ENCODE measurements at regions of chr10 and their contacts with region 1.

Region 1: DNA sequence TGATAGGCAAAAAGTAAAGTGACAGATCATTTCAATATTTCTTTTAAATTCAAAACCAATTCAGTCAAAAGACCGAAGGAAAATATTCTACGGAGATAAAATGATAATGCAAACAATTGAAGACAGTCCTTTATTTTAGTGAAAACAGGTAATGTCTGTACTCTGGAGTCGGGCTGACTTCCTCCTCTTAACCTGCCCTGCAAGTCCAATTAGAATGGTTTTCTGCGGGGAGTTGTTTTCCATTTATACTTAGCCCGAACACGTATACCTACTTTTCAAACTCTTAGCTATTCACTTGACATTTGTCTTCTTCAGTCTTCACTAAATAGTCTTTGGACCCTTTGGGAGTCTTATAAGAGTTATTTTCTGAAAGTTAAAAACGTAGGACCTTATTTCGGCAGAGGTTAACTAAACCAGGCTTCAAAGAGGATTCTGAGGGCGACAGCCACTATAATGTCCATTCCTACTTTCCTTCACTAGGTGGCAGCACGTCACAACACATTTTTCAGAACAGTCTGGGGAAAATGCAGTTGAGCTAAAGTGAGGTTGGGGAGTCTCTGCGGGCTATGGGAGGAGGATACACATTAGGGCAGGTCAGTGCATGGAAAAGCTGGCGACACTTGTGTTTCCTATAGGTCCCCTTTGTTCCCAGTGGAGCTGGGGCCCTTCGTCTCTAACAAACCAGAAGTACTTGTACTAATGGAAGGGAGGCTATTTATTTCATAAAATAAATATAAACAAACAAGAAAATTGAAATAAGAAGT is 472.0 kb downstream of the KCNMA1 start:
- DNase-seq: peak; percentile 76
- H3K4me3 ChIP-seq: no peak overlapping the region
- H3K27ac ChIP-seq: no peak overlapping the region
- H3K4me1 ChIP-seq: no peaks in the 10 kb centered on the region
- H3K27me3 ChIP-seq: peaks cover 3% of the 10 kb centered on the region
- CTCF ChIP-seq: peak; percentile 79

Region 2: DNA sequence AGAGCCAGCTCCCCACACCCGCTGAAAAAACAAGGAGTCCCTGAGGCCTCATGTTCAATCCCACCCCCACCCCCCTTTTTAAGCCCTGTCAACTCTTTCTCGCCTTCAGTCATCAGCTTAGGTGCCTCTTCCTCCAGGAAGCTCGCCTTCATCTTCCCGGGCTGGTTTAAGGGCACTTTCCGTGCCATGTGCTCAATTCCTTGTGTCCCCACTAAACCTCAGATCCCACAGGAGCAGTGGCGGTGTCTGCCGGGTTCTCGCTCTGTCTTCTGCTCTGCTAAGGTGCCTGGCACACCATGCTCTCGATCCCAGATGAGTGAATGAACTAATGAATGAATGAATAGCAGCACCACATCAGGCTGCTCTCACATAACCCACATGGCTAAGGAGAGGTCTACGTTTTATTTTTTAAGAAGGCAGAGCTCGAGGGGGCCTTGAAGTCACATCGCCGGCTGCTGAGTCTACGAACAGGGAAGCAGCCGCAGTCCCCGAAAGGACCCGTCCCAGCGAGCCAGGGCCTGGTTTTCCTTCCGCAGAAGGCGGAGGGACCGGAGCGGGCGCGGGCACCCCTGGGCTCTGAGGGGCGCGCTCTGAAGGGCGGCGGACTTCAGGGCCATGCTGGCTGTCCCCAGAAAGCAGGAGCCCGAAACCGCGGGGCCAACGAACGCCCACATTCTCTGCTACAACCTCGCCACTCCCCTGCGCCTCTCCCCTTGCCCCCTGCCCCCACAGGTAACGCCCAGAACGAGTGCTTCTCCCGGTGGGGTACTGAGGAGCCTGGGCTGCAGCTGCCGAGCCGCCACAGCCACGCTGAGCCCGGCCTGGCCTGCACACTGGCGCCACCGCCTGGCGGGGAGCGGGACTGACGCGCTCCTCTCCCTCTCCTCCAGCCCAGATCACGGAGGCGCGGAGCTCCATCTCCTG is 545.4 kb after region 1 on chr10:
- CTCF ChIA-PET with region 1: interaction called, 5 read pairs
- POLR2A ChIA-PET with region 1: no interaction called
- intact Hi-C with region 1: loop called (anchors 5 kb)
- DNase-seq: peak; percentile 76
- H3K4me3 ChIP-seq: peak overlapping the region; percentile 31
- H3K27ac ChIP-seq: no peak overlapping the region
- H3K4me1 ChIP-seq: peaks cover 10% of the 10 kb centered on the region
- H3K27me3 ChIP-seq: no peaks in the 10 kb centered on the region
- CTCF ChIP-seq: peak; percentile 99

Region 3: DNA sequence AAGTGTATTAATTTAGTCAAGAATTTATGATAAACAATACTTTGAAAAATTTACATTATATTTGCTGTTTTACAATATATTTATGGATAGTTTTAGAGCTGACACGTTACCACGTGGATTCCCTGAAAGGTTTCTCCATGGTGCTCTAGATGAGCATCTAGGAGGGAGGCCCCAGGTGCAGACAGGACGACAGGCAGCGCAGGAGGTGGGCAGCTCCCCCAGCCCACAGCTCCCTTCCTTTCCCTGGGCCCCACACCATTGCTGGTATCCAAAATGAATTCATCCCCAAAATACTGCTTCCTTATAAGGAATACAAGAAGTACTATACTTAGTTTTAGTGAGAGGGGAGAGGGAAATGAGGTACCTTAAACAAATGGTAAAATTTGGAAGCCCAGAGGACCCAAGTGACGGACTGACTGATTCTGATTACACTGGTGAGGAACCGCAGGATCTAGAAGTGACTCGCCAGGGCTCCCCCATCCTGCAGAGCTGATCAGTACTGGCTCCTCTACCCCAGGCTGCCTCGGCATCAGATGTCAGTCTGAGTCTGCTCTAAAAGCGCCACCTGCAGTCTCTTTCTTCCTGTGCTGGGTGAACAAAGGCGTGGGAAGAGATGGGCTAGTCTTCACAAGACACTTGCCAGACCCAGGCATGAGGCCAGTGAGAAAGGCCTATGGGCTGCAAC is 671.8 kb after region 1 on chr10:
- CTCF ChIA-PET with region 1: no interaction called
- POLR2A ChIA-PET with region 1: no interaction called
- intact Hi-C with region 1: loop called (anchors 10 kb)
- DNase-seq: peak; percentile 83
- H3K4me3 ChIP-seq: no peak overlapping the region
- H3K27ac ChIP-seq: peak overlapping the region; percentile 79
- H3K4me1 ChIP-seq: peaks cover 28% of the 10 kb centered on the region
- H3K27me3 ChIP-seq: no peaks in the 10 kb centered on the region
- CTCF ChIP-seq: peak; percentile 68